GM12878 (cell line): ENCODE measurements at regions of chr1 and their contacts with region 1.

Region 1: DNA sequence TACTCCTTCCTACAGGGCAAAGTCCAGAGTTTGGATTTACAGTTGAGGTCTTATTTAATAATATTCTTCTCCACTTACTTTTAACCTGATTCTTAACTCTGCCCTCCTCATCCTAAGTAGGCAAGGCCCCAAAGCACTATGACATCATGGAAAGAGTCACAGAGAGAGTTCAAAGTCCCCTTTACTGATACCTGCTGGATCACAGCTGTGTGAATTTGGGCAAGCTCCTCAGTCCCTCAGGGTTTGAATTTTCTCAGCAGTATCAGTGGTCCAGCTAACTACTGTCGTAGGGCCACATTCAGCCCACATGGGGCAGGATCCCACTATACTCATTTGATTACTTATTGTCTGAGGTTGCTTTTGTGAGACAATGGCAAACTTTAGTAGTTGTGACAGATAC is 16.0 kb downstream of the TYW3 start:
- DNase-seq: no peak
- ATAC-seq: peak; percentile 96
- H3K4me3 ChIP-seq: no peak overlapping the region
- H3K27ac ChIP-seq: no peak overlapping the region
- H3K4me1 ChIP-seq: no peaks in the 10 kb centered on the region
- H3K27me3 ChIP-seq: no peaks in the 10 kb centered on the region
- CTCF ChIP-seq: no peak
- EP300 ChIP-seq: no peak; a peak in 1 of 4 replicates
- POLR2A ChIP-seq: no peak
- RAD21 ChIP-seq: no peak

Region 2: DNA sequence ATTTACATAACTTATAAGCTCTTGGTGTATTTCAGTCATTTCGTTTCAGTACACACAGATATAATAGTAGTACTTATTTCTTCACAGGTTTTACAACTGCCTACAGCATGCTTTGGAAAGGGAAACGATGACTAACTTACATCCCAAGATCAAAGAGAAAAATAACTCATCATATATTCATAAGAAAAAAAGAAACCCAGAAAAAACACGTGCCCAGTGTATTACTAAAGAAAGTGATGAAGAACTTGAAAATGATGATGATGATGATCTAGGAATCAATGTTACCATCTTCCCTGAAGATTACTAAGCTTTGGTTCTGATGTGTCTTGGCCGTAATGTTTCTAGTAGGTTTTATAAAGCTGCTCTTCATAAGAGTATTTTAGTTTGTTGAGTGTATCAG is 14.8 kb after region 1 on chr1:
- CTCF ChIA-PET with region 1: interaction called, 20 read pairs
- POLR2A ChIA-PET with region 1: interaction called, 4 read pairs
- RAD21 ChIA-PET with region 1: interaction called, 7 read pairs
- SMC1A ChIA-PET with region 1: interaction called, 14 read pairs
- in situ Hi-C with region 1: no loop called
- intact Hi-C with region 1: no loop called
- DNase-seq: no peak
- ATAC-seq: no peak
- H3K4me3 ChIP-seq: no peak overlapping the region
- H3K27ac ChIP-seq: no peak overlapping the region
- H3K4me1 ChIP-seq: no peaks in the 10 kb centered on the region
- H3K27me3 ChIP-seq: no peaks in the 10 kb centered on the region
- CTCF ChIP-seq: no peak
- EP300 ChIP-seq: no peak
- POLR2A ChIP-seq: no peak
- RAD21 ChIP-seq: no peak

Region 3: DNA sequence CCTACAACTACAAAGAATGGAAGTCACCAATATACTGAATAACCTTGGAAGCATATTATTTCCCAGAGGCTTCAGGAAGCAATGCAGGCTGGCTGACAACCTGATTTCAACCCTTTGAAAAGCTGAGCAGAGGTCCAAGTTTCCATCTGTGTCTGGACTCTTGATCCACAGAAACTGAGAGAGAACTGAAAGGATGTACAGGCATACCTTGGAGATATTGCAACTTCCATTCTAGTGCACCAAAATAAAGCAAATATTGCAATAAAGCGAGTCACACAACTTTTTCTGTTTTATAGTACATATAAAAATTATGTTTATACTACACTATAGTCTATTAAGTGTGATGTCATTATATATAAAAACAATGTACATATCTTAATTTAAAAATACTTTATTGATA is 69.3 kb after region 1 on chr1:
- CTCF ChIA-PET with region 1: no interaction called
- POLR2A ChIA-PET with region 1: no interaction called
- RAD21 ChIA-PET with region 1: no interaction called
- SMC1A ChIA-PET with region 1: no interaction called
- in situ Hi-C with region 1: no loop called
- intact Hi-C with region 1: no loop called
- DNase-seq: no peak
- ATAC-seq: no peak
- H3K4me3 ChIP-seq: no peak overlapping the region
- H3K27ac ChIP-seq: no peak overlapping the region
- H3K4me1 ChIP-seq: no peaks in the 10 kb centered on the region
- H3K27me3 ChIP-seq: no peaks in the 10 kb centered on the region
- CTCF ChIP-seq: no peak
- EP300 ChIP-seq: no peak
- POLR2A ChIP-seq: no peak
- RAD21 ChIP-seq: no peak

Region 4: DNA sequence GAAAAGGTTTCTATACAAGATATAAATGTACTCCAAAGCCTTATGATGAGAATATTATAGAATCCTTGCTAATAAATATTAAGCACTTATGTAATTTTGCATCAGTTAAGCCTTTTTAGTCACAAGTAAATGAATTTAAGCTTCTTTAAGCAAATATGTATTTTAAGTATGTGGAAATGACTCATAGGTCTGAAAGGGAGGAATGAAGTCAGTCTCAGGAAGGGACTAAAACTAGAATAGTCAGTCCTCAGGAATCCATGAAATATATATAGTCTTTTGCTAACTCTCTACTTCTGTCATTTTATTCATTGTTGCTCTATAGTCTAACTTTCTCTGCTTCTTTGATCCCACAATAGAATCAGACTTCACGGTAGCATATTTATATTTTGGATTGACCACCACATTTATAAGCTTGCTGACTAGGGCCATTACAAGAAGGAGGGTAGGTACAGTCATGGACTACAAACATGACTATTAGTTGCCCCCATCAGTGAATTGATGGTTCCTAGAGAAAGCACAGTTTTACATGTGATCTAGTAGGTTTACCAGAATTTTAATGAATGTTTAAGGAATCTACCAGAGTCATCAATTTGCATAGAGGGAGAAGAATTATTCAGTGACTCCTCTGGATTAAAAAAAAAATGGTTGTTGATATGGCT is 1016.9 kb after region 1 on chr1:
- CTCF ChIA-PET with region 1: no interaction called
- POLR2A ChIA-PET with region 1: no interaction called
- RAD21 ChIA-PET with region 1: no interaction called
- SMC1A ChIA-PET with region 1: no interaction called
- in situ Hi-C with region 1: no loop called
- intact Hi-C with region 1: no loop called
- DNase-seq: no peak
- ATAC-seq: no peak
- H3K4me3 ChIP-seq: no peak overlapping the region
- H3K27ac ChIP-seq: no peak overlapping the region
- H3K4me1 ChIP-seq: no peaks in the 10 kb centered on the region
- H3K27me3 ChIP-seq: no peaks in the 10 kb centered on the region
- CTCF ChIP-seq: no peak
- EP300 ChIP-seq: no peak
- POLR2A ChIP-seq: no peak
- RAD21 ChIP-seq: no peak